ENCODE measurements at regions of chr5 and their contacts with region 1.

Region 1: DNA sequence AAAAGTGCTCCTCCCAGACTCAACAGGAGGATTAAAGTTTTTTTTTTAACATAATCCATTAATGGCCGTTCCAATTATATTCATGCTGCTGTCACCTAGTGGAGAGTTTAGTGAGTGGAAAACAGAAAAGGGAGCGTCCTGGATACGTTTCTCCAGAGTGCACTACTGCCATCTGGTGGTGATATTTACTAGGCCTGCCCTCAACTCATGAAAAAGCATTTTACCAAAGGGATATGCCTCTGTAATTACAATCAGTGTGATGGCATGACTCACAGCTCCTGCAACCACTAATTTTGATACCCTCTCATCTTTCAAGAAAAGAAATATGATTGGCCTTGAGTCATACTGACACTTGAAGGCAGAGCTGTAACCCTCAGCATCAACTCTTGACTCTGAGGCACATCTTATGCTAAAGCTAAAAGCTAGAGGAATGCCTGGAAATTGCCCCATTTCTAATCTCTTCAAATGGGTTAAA is 20.0 kb downstream of the MINAR2 start:
- DNase-seq: peak in 4 of 5 donors; percentile 35 to 56 (median 52)
- ATAC-seq: peak; percentile 80 to 93 (median 89)
- H3K4me3 ChIP-seq: no peak overlapping the region
- H3K27ac ChIP-seq: no peak overlapping the region
- H3K4me1 ChIP-seq: no peaks in the 10 kb centered on the region
- H3K27me3 ChIP-seq: no peaks in the 10 kb centered on the region
- CTCF ChIP-seq: peak; percentile 92 to 99 (median 96)
- POLR2A ChIP-seq: no peak

Region 2: DNA sequence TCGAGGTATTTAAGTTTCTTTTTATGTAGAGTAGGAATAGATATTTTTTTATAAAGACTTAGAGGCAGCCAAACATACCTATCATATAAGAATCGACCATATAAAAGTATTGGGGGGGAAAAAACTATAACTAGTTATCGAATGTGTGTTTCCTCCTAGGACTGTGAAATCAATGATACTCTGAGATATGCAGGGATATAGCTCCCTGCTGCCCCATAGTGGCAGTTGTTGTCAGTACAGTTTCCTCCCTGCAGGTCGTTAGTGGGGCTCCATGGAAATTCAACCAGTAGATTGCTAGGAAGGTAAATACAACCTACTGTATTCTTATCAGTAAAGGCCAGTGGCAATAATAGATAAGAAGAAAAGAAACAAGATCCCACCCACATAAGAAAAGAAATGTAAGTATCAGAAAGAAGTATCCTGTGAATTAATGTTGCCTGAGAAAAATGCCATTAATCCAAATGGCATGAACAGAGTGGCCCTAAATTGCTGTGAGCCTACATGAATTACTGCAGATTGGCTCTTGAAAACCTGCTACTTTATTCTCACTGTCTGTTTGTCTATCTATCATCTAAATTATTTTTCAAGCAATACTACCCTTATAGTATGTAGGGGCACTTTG is 1093.0 kb before region 1 on chr5:
- intact Hi-C with region 1: no loop called
- DNase-seq: peak in 1 of 5 donors; percentile 28
- ATAC-seq: no peak
- H3K4me3 ChIP-seq: no peak overlapping the region
- H3K27ac ChIP-seq: no peak overlapping the region
- H3K4me1 ChIP-seq: no peaks in the 10 kb centered on the region
- H3K27me3 ChIP-seq: no peaks in the 10 kb centered on the region
- CTCF ChIP-seq: peak; percentile 14 to 61 (median 48)
- POLR2A ChIP-seq: no peak

Region 3: GRCh38 chr5:128905571-128906110 is 862.3 kb before region 1 on chr5:
- intact Hi-C with region 1: loop called (anchors 2 to 10 kb)
- DNase-seq: peak in 2 of 5 donors; percentile 32 to 34
- ATAC-seq: peak; percentile 51 to 82 (median 76)
- H3K4me3 ChIP-seq: no peak overlapping the region
- H3K27ac ChIP-seq: no peak overlapping the region
- H3K4me1 ChIP-seq: no peaks in the 10 kb centered on the region
- H3K27me3 ChIP-seq: no peaks in the 10 kb centered on the region
- CTCF ChIP-seq: peak; percentile 75 to 92 (median 84)
- POLR2A ChIP-seq: no peak

Region 4: DNA sequence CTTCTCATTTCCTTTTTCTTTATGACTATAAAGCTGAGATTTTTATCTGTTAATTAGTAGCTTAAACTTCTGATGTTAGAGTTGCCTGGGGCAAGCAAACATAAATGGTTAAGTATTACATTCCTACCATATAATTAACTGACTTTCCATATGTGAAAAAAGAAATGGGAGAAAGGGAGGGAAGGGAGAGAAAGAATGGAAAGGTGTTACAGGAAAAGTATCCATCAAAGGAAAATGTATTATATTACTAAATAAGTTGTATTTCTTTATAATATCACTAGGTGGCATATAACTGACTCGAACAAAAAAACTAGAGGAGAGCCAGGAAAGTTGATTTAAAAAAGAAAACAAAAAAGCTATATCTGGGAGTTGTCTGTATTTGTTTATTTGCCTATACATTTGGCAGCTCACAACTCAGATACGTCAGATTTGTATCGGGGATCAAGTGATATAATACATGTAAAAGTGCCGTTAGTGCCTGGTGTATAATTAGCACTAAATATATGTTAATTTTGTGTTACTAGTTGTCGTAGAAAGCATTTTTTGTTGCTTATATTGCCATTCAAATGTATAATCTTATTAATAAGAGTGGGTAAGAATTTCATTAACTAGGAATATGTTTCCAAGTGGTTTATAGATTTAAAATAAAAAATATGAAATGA is 367.5 kb before region 1 on chr5:
- intact Hi-C with region 1: loop called in 2 of 10 experiments (anchors 10 kb)
- DNase-seq: no peak
- ATAC-seq: no peak
- H3K4me3 ChIP-seq: no peak overlapping the region
- H3K27ac ChIP-seq: no peak overlapping the region
- H3K4me1 ChIP-seq: no peaks in the 10 kb centered on the region
- H3K27me3 ChIP-seq: no peaks in the 10 kb centered on the region
- CTCF ChIP-seq: peak in 8 of 12 donors; percentile 7 to 34 (median 27)
- POLR2A ChIP-seq: no peak

Region 5: DNA sequence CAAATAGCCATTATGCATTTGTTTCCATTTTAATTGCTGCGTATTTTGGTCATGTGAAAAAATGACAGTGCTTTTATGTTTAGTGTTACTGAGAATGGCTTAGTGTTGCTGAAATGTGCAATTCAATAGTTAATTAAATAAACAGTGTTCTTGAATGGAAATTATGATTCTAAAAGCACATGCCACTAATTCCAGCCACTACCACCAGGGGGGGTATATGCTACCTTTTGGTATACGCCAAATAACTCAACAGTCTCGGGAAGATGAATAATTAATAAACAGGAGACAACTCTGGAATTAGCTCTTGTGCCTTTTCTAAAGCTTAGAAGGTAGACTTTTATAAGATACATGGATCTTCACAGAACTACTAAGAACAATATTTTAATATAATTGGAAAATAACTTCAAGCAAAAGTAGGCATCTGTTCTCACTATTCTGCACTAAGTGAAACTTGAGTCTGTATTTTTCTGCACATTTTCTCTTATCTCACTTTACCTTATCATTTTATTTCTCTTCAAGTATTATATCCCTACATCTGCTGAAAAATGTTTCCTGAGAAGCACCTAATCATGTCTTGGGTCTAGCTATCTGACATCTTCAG is 103.5 kb before region 1 on chr5:
- intact Hi-C with region 1: loop called in 1 of 10 experiments (anchors 10 kb)
- DNase-seq: peak in 2 of 5 donors; percentile 8 to 28
- ATAC-seq: no peak
- H3K4me3 ChIP-seq: no peak overlapping the region
- H3K27ac ChIP-seq: no peak overlapping the region
- H3K4me1 ChIP-seq: no peaks in the 10 kb centered on the region
- H3K27me3 ChIP-seq: no peaks in the 10 kb centered on the region
- CTCF ChIP-seq: peak; percentile 45 to 79 (median 62)
- POLR2A ChIP-seq: no peak

Region 6: DNA sequence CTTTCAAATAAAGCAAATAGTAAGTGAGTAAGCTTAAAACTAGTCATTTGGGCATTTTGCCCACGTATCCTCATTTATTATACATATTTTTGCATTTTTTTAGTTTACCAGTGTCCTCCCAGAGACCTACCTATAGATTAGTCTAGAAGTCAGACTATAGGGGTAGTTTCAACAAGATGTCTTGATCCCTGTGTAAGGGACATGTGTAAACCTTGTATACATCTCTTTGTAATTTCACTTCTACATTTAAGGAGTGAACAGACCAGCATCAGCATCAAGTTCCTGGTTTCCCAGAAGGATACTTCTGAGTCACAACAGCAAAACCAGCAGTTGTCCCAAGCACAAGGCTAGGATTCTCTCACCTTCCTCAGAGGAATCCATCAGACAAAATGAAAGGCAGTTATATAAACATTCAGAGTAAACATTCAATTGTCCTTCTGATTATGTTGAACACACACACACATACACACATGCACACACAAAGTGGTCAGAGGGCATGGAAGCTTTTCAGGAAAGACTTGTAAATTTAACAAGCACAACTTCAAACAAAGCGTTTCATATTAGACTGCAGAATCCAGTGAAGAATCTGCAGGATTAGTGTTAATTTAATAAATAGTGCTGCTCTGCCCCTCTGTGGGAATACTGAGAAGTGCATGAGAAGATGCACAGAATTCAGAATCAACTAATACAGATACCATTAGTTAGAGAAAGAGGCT is 1341.8 kb after region 1 on chr5:
- intact Hi-C with region 1: loop called in 8 of 10 experiments (anchors 2 to 10 kb)
- DNase-seq: no peak
- ATAC-seq: peak in 2 of 4 donors; percentile 58 to 68
- H3K4me3 ChIP-seq: no peak overlapping the region
- H3K27ac ChIP-seq: no peak overlapping the region
- H3K4me1 ChIP-seq: peaks cover 0 to 5% (median 0%) of the 10 kb centered on the region in 12 donors
- H3K27me3 ChIP-seq: no peaks in the 10 kb centered on the region
- CTCF ChIP-seq: peak; percentile 44 to 81 (median 68)
- POLR2A ChIP-seq: no peak